ENCODE measurements at regions of chr2 and their contacts with region 1.

Region 1: DNA sequence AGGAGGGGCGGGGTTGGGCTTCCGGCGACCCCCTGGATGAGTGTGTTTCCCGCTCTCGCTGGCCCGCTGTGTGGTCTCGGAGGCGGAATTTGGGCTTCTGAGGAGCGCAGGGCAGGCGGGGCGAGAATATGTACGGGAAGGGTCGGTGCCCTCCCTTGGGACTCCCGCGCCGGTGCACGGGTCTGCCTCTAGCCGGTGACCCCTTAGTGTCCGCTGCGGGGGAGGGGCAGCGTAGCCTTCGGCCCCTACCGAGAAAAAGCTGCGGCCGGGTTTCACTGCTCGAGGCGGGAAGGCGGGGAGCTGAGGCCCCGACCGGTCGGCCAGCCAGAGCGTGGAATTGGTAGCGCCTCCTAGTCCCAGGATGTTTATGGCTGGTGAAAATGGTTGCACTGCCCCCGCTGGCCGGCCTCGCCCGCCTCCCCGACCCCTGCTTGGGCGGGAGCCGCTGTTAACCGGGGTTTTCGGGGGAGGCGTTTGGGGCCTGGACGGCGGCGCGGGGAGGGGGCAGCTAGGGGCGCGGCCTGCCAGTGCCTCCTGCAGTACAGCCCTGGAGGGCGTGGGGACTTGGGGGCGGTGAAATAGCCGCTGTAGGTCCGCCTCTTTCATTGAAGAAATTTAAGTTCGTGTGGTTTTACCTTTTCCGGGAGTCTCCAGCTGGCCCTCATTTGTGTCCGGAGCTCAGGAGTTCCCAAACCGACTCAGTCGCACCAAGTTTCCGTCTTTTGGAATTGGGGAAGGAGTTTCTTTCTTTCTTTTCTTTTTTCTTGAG is at the start of gene UGP2:
- DNase-seq: peak; percentile 68 to 92 (median 83)
- ATAC-seq: peak; percentile 68
- H3K4me3 ChIP-seq: peak within 1 kb of the TSS; percentile 94 to 98
- H3K4me3 Mint-ChIP-seq: peak within 1 kb of the TSS; percentile 99
- H3K27ac ChIP-seq: peak within 1 kb of the TSS; percentile 81 to 89
- H3K27ac Mint-ChIP-seq: peak within 1 kb of the TSS; percentile 98
- H3K4me1 ChIP-seq: peaks cover 41% of the 10 kb centered on the region
- H3K4me1 Mint-ChIP-seq: peaks cover 52% of the 10 kb centered on the region
- H3K27me3 ChIP-seq: no peaks in the 10 kb centered on the region
- H3K27me3 Mint-ChIP-seq: no peaks in the 10 kb centered on the region
- CTCF ChIP-seq: peak; percentile 24
- total RNA-seq, gene UGP2: 43.9 to 48.2 TPM

Region 2: GRCh38 chr2:61888267-61889055 is 1953.0 kb before region 1 on chr2 and contains the start of gene CCT4:
- CTCF ChIA-PET with region 1: no interaction called
- POLR2A ChIA-PET with region 1: no interaction called
- intact Hi-C with region 1: loop called in 1 of 2 experiments (anchors 1 kb)
- DNase-seq: peak; percentile 81 to 98 (median 92)
- ATAC-seq: peak; percentile 89
- H3K4me3 ChIP-seq: peak within 1 kb of the TSS; percentile 85 to 100
- H3K4me3 Mint-ChIP-seq: peak within 1 kb of the TSS; percentile 95
- H3K27ac ChIP-seq: peak within 1 kb of the TSS; percentile 99
- H3K27ac Mint-ChIP-seq: peak within 1 kb of the TSS; percentile 98
- H3K4me1 ChIP-seq: peaks cover 28% of the 10 kb centered on the region
- H3K4me1 Mint-ChIP-seq: peaks cover 33% of the 10 kb centered on the region
- H3K27me3 ChIP-seq: no peaks in the 10 kb centered on the region
- H3K27me3 Mint-ChIP-seq: no peaks in the 10 kb centered on the region
- CTCF ChIP-seq: no peak
- total RNA-seq, gene CCT4: 102 to 106 TPM

Region 3: DNA sequence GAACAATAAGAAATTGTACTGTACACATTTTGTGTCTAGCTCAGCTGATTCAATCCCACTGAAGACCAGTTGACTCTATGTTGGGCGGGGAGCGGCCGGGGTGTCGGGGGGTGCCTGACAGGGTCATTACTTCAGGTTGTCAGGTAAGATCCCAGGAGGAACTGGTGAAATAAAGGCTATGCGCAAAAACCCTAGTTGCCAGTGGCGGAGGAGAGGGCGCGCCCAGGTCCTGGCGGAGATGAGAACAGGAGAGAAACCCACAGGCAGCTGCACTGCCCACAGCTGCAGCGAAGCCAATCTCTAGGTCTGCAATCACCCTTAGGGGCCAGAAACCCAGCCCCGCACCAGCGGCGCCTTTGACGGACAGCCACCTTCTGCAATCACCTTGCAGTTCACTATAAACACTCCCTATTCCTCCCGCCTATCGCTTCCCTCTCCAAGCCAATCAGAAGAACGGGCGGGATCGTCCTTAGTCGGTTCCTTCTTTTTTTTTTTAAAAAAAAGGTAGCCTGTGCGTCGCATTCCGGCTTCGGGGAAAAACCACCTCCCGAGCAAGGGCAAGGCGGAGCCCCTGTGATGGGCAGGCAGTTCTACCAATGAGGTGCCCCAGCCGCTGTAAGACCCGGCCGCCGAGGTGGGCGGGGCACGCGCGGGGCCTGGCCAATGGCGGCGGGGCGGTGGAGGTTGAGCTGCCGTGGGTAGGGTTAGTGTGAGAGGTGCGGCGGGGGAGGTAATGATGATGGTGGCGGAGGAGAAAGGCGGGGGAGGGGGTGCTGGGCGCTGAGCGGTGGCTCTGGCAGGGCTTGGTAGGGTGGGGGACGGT is 1136.2 kb before region 1 on chr2 and contains the start of gene EHBP1:
- CTCF ChIA-PET with region 1: no interaction called
- POLR2A ChIA-PET with region 1: no interaction called
- intact Hi-C with region 1: loop called in 1 of 2 experiments (anchors 10 kb)
- DNase-seq: peak; percentile 93 to 99 (median 97)
- ATAC-seq: peak; percentile 96
- H3K4me3 ChIP-seq: peak within 1 kb of the TSS; percentile 74 to 77
- H3K4me3 Mint-ChIP-seq: peak within 1 kb of the TSS; percentile 85
- H3K27ac ChIP-seq: peak within 1 kb of the TSS; percentile 36 to 65
- H3K27ac Mint-ChIP-seq: peak within 1 kb of the TSS; percentile 79
- H3K4me1 ChIP-seq: peaks cover 11% of the 10 kb centered on the region
- H3K4me1 Mint-ChIP-seq: peaks cover 41% of the 10 kb centered on the region
- H3K27me3 ChIP-seq: no peaks in the 10 kb centered on the region
- H3K27me3 Mint-ChIP-seq: no peaks in the 10 kb centered on the region
- CTCF ChIP-seq: no peak
- total RNA-seq, gene EHBP1: 16.2 to 16.7 TPM

Region 4: GRCh38 chr2:63856303-63856603 is 14.8 kb after region 1 on chr2:
- CTCF ChIA-PET with region 1: interaction called, 29 read pairs
- POLR2A ChIA-PET with region 1: interaction called, 47 read pairs
- intact Hi-C with region 1: loop called (anchors 1 kb)
- DNase-seq: peak in 7 of 9 experiments; percentile 32 to 89 (median 43)
- ATAC-seq: peak; percentile 88
- H3K4me3 ChIP-seq: peak overlapping the region in 1 of 2 experiments; percentile 1
- H3K4me3 Mint-ChIP-seq: peak overlapping the region; percentile 76
- H3K27ac ChIP-seq: peak overlapping the region; percentile 57 to 69
- H3K27ac Mint-ChIP-seq: peak overlapping the region; percentile 97
- H3K4me1 ChIP-seq: peaks cover 48% of the 10 kb centered on the region
- H3K4me1 Mint-ChIP-seq: peaks cover 64% of the 10 kb centered on the region
- H3K27me3 ChIP-seq: no peaks in the 10 kb centered on the region
- H3K27me3 Mint-ChIP-seq: no peaks in the 10 kb centered on the region
- CTCF ChIP-seq: no peak

Region 5: GRCh38 chr2:64018923-64019718 is 177.7 kb after region 1 on chr2 and contains the start of gene VPS54:
- CTCF ChIA-PET with region 1: no interaction called
- POLR2A ChIA-PET with region 1: no interaction called
- intact Hi-C with region 1: loop called (anchors 5 kb)
- DNase-seq: peak; percentile 22 to 80 (median 57)
- ATAC-seq: peak; percentile 65
- H3K4me3 ChIP-seq: peak within 1 kb of the TSS; percentile 79 to 89
- H3K4me3 Mint-ChIP-seq: peak within 1 kb of the TSS; percentile 96
- H3K27ac ChIP-seq: peak within 1 kb of the TSS; percentile 57 to 77
- H3K27ac Mint-ChIP-seq: peak within 1 kb of the TSS; percentile 97
- H3K4me1 ChIP-seq: peaks cover 31% of the 10 kb centered on the region
- H3K4me1 Mint-ChIP-seq: peaks cover 46% of the 10 kb centered on the region
- H3K27me3 ChIP-seq: no peaks in the 10 kb centered on the region
- H3K27me3 Mint-ChIP-seq: no peaks in the 10 kb centered on the region
- CTCF ChIP-seq: no peak
- total RNA-seq, gene VPS54: 7.0 to 8.5 TPM

Region 6: DNA sequence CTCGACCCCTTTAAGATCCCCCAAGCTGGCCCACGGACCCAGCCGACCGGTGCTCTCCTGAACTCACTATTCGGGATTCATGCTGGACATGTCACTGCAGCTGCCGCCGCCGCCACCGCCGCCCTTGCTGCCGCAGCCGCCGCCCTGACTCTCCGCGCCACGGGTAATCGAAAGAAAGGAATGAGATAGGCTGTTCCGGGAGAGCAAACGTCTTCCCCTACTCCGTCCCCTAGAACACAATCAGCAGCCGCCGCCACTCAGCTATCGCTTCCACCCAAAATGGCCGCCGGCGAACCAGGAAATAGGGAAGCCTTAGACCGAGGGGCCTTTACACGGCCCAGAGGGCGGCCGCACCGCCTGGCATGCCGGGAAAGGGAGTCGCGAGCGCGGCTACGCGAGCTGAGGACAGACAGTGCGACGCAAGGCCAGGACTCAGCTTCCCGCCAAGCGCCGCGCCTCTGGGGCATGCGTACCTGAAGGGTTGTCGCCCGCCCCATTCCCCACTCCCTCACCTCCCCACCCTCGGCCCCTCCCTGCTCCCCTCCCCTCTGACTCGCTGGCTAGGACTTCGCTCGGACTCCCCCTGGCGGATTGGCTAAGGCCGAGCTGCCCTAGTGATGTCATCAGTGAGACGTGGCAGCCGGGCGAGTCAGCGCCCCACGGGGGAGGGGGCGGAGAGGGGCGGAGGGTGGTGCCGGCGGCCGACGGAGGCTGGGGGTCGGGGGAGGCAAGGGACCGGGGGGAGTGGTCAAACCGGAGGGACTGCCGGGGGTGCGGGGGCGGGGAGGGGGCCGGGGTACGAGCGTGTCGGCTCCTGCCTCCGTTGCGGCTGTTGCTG is 1288.6 kb after region 1 on chr2 and contains the start of gene RAB1A:
- CTCF ChIA-PET with region 1: no interaction called
- POLR2A ChIA-PET with region 1: no interaction called
- intact Hi-C with region 1: loop called in 1 of 2 experiments (anchors 2 kb)
- DNase-seq: peak; percentile 98 to 100 (median 99)
- ATAC-seq: peak; percentile 94
- H3K4me3 ChIP-seq: peak within 1 kb of the TSS; percentile 87 to 88
- H3K4me3 Mint-ChIP-seq: peak within 1 kb of the TSS; percentile 99
- H3K27ac ChIP-seq: peak within 1 kb of the TSS; percentile 91 to 97
- H3K27ac Mint-ChIP-seq: peak within 1 kb of the TSS; percentile 98
- H3K4me1 ChIP-seq: peaks cover 40% of the 10 kb centered on the region
- H3K4me1 Mint-ChIP-seq: peaks cover 44% of the 10 kb centered on the region
- H3K27me3 ChIP-seq: no peaks in the 10 kb centered on the region
- H3K27me3 Mint-ChIP-seq: no peaks in the 10 kb centered on the region
- CTCF ChIP-seq: no peak
- total RNA-seq, gene RAB1A: 101 to 103 TPM